Activated T-helper 1 cell treated with anti-CD3 and anti-CD28 coated beads, Interleukin-12 subunit alpha, Interleukin-12 subunit beta, Interleukin-2, Interleukin-4 antibody, amounts not matched to agents 30 ng/mL and 10 ng/mL and 1 ng/mL, durations not matched to agents 14 hours and 24 hours and 36 hours (primary cell): ENCODE measurements at regions of chr19 and their contacts with region 1.

Region 1: GRCh38 chr19:12913011-12913561 is 6.0 kb downstream of the SYCE2 start:
- DNase-seq: no peak
- H3K4me3 Mint-ChIP-seq: no peak overlapping the region
- H3K27ac Mint-ChIP-seq: peak overlapping the region; percentile 55
- H3K4me1 Mint-ChIP-seq: peaks cover 19% of the 10 kb centered on the region
- H3K27me3 Mint-ChIP-seq: no peaks in the 10 kb centered on the region

Region 2: DNA sequence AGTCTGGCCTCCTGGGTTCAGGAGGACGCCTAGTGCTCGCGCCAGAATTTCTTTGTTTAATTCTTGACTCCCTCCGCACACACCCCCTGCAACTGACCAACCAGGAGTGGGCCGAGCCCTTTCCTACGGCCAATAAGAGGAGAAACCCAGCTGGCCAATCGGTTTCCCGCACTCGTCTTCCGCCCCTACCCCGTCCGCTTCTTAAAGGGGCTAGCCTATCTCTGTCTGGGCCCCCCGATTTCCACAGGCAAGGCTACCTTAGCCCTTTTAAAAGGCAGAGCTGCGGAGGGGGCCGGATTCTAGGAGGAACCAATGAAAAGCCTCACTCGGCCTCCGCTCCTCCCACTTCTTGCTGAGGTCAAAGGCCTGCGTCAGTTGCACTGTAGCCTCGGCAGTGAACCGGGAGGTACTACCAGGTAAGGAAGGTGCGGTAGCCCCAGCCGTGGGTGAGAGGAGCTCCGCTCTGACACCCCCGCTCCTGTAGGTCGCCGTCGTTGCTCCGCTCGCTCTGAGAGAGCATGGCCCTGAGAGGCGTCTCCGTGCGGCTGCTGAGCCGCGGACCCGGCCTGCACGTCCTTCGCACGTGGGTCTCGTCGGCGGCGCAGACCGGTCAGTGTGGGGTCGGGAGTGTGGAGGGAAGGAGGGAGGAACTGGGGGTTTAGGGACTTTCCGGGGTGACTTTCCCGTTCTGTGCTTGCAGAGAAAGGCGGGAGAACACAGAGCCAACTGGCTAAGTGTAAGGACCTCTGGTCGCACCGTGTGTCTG is 22.1 kb before region 1 on chr19 and contains the start of gene GCDH:
- intact Hi-C with region 1: loop called (anchors 1 kb)
- DNase-seq: peak; percentile 95
- H3K4me3 Mint-ChIP-seq: peak within 1 kb of the TSS; percentile 97
- H3K27ac Mint-ChIP-seq: peak within 1 kb of the TSS; percentile 88
- H3K4me1 Mint-ChIP-seq: peaks cover 13% of the 10 kb centered on the region
- H3K27me3 Mint-ChIP-seq: no peaks in the 10 kb centered on the region
- total RNA-seq, gene GCDH: 65.9 and 68.8 TPM in 2 replicates